ENCODE measurements at regions of chr7 and their contacts with region 1.

Region 1: DNA sequence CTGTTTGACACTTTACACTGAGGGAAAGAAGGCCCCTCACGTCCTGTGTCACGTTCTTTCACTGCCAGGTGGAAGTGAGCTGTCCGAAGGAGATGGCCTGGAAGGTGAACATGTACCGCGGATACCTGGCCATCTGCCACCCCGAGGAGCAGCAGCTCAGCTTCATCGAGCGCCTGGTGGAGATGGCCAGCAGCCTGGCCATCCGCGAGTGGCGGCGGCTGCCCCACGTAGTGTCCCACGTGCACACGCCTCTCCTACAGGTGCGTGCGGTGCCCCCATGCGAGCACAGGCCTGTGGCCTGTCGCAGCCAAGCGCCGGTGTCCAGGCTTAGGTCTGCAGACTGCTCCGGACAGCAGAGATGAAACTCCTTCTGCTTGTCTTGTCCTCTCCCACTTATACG is 103.4 kb downstream of the TRRAP start:
- DNase-seq: no peak
- ATAC-seq: no peak
- H3K4me3 ChIP-seq: no peak overlapping the region
- H3K27ac ChIP-seq: no peak overlapping the region
- H3K4me1 ChIP-seq: no peaks in the 10 kb centered on the region
- H3K27me3 ChIP-seq: no peaks in the 10 kb centered on the region
- CTCF ChIP-seq: no peak
- POLR2A ChIP-seq: no peak
- RAD21 ChIP-seq: no peak

Region 2: DNA sequence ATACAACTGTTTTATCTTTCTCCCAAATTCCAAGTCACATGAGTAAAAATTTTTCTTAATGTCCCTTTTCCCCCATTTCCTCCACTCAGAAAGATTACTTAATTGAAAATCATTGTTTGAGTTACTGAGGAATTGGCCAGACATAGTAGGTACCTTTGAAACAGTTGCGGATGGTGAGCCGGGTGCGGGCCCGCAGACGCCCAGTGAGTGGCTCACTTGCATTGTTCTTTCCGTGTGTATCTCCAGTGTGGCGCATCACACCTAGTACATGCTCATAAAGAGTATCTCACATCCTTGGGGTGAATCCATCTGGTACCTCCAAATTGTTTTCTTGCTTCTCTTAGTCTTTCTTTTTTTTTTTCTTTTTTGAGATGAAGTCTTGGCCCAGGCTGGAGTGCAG is 89.1 kb before region 1 on chr7:
- CTCF ChIA-PET with region 1: no interaction called
- POLR2A ChIA-PET with region 1: no interaction called
- dilution Hi-C with region 1: no loop called
- in situ Hi-C with region 1: no loop called
- intact Hi-C with region 1: loop called (anchors 10 kb)
- DNase-seq: no peak
- ATAC-seq: no peak
- H3K4me3 ChIP-seq: no peak overlapping the region
- H3K27ac ChIP-seq: no peak overlapping the region
- H3K4me1 ChIP-seq: no peaks in the 10 kb centered on the region
- H3K27me3 ChIP-seq: no peaks in the 10 kb centered on the region
- CTCF ChIP-seq: no peak
- POLR2A ChIP-seq: no peak
- RAD21 ChIP-seq: no peak

Region 3: DNA sequence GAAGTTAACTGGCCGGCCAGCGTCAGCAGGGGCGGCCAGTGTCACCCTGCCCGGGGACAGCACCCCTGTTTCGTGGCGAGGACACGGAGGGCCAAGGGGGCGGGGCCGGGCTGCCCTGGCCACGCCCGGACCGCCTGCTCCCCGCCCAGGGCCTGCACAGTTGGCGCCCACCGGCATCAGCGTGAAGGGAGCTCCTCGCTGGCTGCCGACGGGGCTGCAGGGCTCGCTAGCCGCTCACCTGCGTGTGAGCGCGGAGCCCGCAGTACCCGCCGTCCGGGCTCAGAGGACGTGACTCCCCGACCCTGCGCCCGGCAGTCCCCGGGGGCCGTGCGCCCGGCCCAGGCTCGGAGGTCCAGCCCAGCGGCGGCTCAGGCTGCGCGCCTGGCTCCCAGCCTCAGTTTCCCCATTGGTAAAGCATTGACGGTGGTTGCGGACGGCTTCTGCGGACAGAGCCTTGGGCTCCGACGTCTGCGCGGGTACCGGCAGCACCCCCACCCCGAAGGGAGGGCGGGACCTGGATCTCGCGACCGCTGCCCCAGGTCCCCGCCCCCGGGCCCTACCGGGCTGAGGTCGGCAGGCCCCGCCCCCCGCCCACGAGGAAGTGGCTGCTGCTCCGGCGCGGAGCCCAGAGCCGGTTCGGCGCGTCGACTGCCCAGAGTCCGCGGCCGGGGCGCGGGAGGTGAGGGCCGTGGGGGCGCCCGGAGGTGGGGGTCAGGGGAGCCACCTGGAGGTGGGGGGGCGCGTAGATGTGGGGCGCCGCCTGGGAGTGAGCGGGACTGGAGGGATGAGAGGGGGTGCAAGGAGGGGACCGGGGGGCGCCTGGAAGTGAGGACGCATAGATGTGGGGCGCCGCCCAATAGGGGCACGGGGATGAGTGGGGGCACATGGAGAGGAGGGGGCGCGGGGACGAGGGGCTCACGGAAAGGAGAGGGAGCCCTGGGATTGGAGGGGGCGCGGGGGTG is 392.7 kb after region 1 on chr7 and contains the start of gene ARPC1B:
- CTCF ChIA-PET with region 1: no interaction called
- POLR2A ChIA-PET with region 1: no interaction called
- dilution Hi-C with region 1: no loop called
- in situ Hi-C with region 1: no loop called
- intact Hi-C with region 1: no loop called
- DNase-seq: peak; percentile 51
- ATAC-seq: peak; percentile 73
- H3K4me3 ChIP-seq: peak within 1 kb of the TSS; percentile 93
- H3K27ac ChIP-seq: peak within 1 kb of the TSS; percentile 67
- H3K4me1 ChIP-seq: peaks cover 8% of the 10 kb centered on the region
- H3K27me3 ChIP-seq: no peaks in the 10 kb centered on the region
- CTCF ChIP-seq: no peak
- POLR2A ChIP-seq: peak; percentile 54; the same call in 1 of the 2 replicates
- RAD21 ChIP-seq: no peak
- total RNA-seq, gene ARPC1B: 243 and 351 TPM in 2 replicates